Tibial artery (tissue), 4 donors: ENCODE measurements at regions of chr15 and their contacts with region 1.

Region 1: DNA sequence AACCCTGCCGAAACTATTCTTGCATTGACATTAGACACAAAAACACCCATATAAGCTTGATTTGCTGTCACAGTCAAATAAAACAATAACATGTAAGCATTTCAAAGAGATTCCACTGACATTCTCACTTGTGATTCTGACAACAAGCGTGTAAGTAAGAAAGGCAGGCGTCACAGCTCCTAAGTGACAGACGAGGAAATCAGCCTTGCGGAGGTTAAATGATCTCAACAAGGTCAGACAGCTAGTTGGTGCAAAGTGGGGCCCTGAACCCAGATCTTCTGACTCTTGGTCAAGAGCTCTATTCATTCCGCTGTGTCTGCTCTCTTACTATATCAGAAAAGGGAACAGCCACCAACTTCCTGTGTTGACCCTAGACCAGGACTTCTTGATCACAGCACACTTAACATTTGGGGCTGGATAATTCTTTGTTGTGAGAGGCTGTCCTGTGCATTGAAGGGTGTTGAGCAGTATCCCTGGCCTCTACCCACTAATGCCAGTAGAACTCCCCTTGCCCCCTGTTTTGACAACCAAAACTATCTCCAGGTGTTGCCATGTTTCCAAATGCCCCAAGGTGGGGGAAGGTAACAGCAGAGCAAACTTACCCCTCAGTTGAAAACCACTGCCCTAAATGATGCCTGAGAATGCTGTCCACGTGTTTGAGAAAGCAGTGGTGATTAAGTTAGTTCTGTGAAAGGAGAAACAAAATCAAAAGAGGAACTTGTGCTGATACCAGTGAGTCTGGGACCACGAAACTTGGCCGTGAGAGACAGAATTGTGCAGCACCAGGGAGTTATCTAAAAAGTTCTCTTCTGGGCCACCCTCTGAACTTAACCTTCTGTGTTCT is 86.1 kb downstream of the LIPC start:
- DNase-seq: no peak
- H3K4me3 ChIP-seq: no peak overlapping the region
- H3K27ac ChIP-seq: no peak overlapping the region
- H3K4me1 ChIP-seq: peaks cover 0 to 26% (median 18%) of the 10 kb centered on the region in 4 donors
- H3K27me3 ChIP-seq: no peaks in the 10 kb centered on the region
- CTCF ChIP-seq: no peak

Region 2: GRCh38 chr15:58457381-58457965 is 60.4 kb before region 1 on chr15:
- intact Hi-C with region 1: loop called (anchors 10 kb)
- DNase-seq: no peak
- H3K4me3 ChIP-seq: no peak overlapping the region
- H3K27ac ChIP-seq: no peak overlapping the region
- H3K4me1 ChIP-seq: no peaks in the 10 kb centered on the region
- H3K27me3 ChIP-seq: no peaks in the 10 kb centered on the region
- CTCF ChIP-seq: no peak